Sciatic nerve (tissue), 2 donors: ENCODE measurements at regions of chr17 and their contacts with region 1.

Region 1: DNA sequence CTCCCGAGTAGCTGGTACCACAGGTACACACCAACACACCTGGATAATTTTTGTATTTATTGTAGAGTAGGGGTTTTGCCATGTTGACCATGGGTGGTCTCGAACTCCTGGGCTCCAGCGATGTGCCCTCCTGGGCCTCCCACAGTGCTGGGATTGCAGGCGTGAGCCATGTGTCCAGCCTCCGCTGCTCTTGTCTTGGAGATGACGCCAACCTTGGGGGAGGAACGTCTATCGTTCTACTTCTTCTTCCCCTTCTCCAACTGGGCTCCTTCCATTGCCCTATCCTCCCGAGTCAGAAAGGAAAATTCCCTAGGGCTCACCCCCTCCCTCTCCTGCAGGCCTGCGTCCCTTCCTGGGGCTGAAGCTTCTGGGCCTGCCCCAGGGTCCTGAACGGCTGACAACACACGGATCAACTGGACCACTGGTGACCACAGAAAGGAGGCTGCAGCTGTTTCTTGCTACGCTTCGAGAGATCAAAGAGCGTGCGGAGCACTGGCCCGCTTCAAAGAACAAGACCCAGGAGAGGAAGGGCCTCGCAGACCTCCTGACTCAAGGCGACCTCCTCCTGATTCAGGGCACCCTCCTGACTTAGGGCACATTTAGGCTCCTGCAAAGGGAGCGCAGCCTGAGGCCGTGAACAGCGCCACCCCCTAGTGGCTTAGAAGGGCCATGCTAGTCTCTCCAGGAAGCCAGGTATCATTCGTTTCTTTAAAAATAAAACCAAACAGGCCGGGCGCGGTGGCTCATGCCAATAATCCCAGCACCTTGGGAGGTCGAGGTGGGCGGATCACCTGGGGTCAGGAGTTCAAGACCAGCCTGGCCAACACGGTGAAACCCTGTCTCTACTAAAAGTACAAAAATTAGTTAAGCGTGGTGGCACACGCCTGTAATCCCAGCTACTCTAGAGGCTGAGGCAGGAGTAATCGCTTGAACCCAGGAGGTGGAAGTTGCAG is 48.5 kb upstream of the HELZ start:
- DNase-seq: peak; percentile 82
- ATAC-seq: peak; percentile 60

Region 2: GRCh38 chr17:67221062-67221998 is 72.2 kb before region 1 on chr17:
- intact Hi-C with region 1: loop called (anchors 10 kb)
- DNase-seq: no peak
- ATAC-seq: peak; percentile 75

Region 3: DNA sequence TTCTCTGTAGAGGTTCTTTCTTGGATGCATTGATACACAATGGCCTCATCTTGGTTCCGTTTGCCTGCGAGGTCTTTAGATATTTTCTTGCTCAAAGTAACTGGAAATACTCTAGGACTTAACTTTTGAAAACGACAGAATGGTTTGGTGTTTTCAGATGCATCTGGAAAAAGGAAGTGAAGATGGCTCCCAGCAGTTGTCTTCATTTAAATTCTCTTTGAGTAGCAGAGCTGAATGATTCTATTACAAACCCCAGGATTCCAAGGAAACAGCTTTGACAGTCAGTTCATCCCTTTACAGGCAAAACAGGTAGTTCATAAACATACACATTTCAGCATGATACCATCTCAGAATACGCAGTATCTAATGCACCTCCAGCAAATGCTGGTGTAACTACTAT is 18.0 kb after region 1 on chr17:
- intact Hi-C with region 1: no loop called
- DNase-seq: no peak
- ATAC-seq: no peak

Region 4: DNA sequence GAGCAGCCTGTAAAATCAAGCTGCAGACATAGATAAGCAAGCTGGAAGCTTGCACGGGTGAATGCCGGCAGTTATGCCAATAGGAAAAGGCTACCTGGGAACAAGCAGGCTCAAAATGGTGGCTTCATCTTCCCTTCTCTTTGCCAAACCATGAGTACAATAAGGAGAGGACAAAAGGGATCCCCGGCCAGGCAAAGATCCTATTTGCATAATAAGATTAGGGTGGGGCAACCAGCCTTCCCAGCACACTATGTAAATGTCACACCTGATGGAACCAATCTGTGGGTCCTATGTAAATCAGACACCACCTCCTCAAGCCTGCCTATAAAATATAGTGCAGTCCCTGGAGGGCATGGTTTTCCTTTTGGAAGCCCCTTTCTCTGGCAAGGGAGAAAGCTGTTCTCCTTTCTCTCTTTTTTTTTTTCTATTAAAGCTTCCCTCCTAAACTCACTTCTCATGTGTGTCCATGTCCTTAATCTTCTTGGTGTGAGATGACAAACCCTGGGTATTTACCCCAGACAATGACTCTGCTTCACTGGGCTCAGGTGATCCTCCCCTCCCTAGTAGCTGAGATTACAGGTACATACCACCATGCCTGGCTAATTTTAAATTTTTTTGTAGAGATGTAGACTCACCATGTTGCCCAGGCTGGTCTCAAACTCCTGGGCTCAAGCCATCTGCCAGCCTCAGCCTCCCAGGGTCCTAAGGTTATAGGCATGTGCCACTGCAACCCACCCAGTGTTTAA is 28.7 kb after region 1 on chr17:
- intact Hi-C with region 1: no loop called
- DNase-seq: no peak
- ATAC-seq: no peak

Region 5: GRCh38 chr17:67366193-67367157 is 72.9 kb after region 1 on chr17 and contains the start of gene PSMD12:
- intact Hi-C with region 1: no loop called
- DNase-seq: peak; percentile 95
- ATAC-seq: peak; percentile 99
- total RNA-seq, gene PSMD12: 40.6 TPM